HepG2 (cell line): ENCODE measurements at regions of chr3 and their contacts with region 1.

Region 1: GRCh38 chr3:94716326-94717010 is 653.6 kb downstream of the NSUN3 start:
- DNase-seq: peak; percentile 24
- ATAC-seq: peak; percentile 47; the same call in 2 of the 3 replicates
- H3K4me3 ChIP-seq: no peak overlapping the region
- H3K27ac ChIP-seq: no peak overlapping the region
- H3K4me1 ChIP-seq: no peaks in the 10 kb centered on the region
- H3K27me3 ChIP-seq: no peaks in the 10 kb centered on the region
- CTCF ChIP-seq: peak; percentile 48
- EP300 ChIP-seq: no peak
- POLR2A ChIP-seq: no peak
- RAD21 ChIP-seq: no peak

Region 2: DNA sequence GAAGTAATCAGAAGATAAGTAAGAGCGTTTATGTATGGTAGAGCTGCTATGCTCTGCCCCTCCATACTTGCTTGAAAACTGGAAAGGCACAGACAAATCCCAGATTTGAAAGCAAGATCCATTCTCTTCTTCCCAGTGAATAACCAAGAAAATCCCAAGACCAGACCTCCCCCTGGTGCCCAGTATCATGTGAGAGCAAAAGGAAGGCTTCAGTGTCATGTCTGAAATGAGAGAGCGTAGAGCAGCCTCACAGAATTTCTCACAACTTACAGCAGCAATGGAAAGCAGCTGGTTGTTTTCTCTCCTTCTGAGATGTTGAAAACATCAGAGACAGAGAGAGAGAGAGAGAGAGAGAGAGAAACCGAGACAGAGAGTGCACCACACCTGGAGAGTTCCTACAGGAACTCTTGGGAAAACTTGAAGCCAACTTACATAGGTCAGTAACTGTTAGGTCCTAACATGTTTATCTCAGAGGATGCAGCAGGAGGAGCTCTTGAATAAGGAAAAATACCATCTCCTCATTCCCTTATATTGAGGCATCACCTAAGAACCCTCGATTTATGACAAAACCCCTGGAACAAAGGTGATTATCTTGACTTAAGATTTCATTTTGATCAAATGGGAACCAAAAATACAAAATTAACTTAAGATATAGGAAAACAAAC is 380.3 kb before region 1 on chr3:
- CTCF ChIA-PET with region 1: interaction called, 3 read pairs
- POLR2A ChIA-PET with region 1: no interaction called
- in situ Hi-C with region 1: no loop called
- intact Hi-C with region 1: loop called (anchors 1 kb)
- DNase-seq: peak; percentile 18
- ATAC-seq: peak; percentile 79
- H3K4me3 ChIP-seq: no peak overlapping the region
- H3K27ac ChIP-seq: no peak overlapping the region
- H3K4me1 ChIP-seq: no peaks in the 10 kb centered on the region
- H3K27me3 ChIP-seq: no peaks in the 10 kb centered on the region
- CTCF ChIP-seq: peak; percentile 58
- EP300 ChIP-seq: no peak
- POLR2A ChIP-seq: no peak
- RAD21 ChIP-seq: no peak

Region 3: DNA sequence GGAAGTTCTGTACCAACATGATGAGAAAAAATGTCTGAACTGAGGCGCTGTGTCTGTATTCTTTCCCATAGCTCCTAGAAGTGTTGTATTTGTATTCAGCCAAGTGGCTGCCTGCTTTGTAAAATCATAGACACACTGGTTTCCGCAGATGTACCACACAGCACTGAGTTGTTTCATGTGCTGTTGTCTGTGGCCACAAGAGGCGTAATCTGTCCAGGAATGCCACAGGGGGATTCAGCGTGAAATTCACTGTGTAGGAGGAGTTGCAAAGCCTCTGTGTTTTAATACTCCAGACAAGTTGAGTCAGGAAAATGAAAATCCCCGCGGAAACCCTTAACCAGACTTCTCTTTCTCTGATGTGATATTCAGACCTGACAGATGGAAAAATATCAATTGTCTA is 191.4 kb before region 1 on chr3:
- CTCF ChIA-PET with region 1: interaction called, 10 read pairs
- POLR2A ChIA-PET with region 1: no interaction called
- in situ Hi-C with region 1: loop called (anchors 5 kb)
- intact Hi-C with region 1: loop called (anchors 1 kb)
- DNase-seq: peak; percentile 60
- ATAC-seq: peak; percentile 97
- H3K4me3 ChIP-seq: peak overlapping the region in 1 of 3 experiments; percentile 19; a peak in 1 of 6 replicates
- H3K27ac ChIP-seq: no peak overlapping the region
- H3K4me1 ChIP-seq: peaks cover 27% of the 10 kb centered on the region
- H3K27me3 ChIP-seq: no peaks in the 10 kb centered on the region
- CTCF ChIP-seq: peak; percentile 82
- EP300 ChIP-seq: no peak
- POLR2A ChIP-seq: no peak
- RAD21 ChIP-seq: peak; percentile 42; the same call in 1 of the 2 replicates

Region 4: GRCh38 chr3:94548581-94549316 is 167.7 kb before region 1 on chr3:
- CTCF ChIA-PET with region 1: no interaction called
- POLR2A ChIA-PET with region 1: no interaction called
- in situ Hi-C with region 1: no loop called
- intact Hi-C with region 1: no loop called
- DNase-seq: no peak
- ATAC-seq: no peak
- H3K4me3 ChIP-seq: no peak overlapping the region
- H3K27ac ChIP-seq: no peak overlapping the region
- H3K4me1 ChIP-seq: no peaks in the 10 kb centered on the region
- H3K27me3 ChIP-seq: no peaks in the 10 kb centered on the region
- CTCF ChIP-seq: no peak
- EP300 ChIP-seq: no peak
- POLR2A ChIP-seq: no peak
- RAD21 ChIP-seq: no peak

Region 5: GRCh38 chr3:94616821-94617220 is 99.6 kb before region 1 on chr3:
- CTCF ChIA-PET with region 1: no interaction called
- POLR2A ChIA-PET with region 1: no interaction called
- in situ Hi-C with region 1: no loop called
- intact Hi-C with region 1: loop called (anchors 10 kb)
- DNase-seq: peak; percentile 50
- ATAC-seq: peak; percentile 31; the same call in 2 of the 3 replicates
- H3K4me3 ChIP-seq: no peak overlapping the region
- H3K27ac ChIP-seq: no peak overlapping the region
- H3K4me1 ChIP-seq: 0 out of 2 replicates have a peak, but pooled peaks cover 6% of the 10 kb centered on the region
- H3K27me3 ChIP-seq: no peaks in the 10 kb centered on the region
- CTCF ChIP-seq: no peak
- EP300 ChIP-seq: no peak
- POLR2A ChIP-seq: no peak
- RAD21 ChIP-seq: no peak